Right cardiac atrium (tissue), 5 donors: ENCODE measurements at regions of chr5 and their contacts with region 1.

Region 1: DNA sequence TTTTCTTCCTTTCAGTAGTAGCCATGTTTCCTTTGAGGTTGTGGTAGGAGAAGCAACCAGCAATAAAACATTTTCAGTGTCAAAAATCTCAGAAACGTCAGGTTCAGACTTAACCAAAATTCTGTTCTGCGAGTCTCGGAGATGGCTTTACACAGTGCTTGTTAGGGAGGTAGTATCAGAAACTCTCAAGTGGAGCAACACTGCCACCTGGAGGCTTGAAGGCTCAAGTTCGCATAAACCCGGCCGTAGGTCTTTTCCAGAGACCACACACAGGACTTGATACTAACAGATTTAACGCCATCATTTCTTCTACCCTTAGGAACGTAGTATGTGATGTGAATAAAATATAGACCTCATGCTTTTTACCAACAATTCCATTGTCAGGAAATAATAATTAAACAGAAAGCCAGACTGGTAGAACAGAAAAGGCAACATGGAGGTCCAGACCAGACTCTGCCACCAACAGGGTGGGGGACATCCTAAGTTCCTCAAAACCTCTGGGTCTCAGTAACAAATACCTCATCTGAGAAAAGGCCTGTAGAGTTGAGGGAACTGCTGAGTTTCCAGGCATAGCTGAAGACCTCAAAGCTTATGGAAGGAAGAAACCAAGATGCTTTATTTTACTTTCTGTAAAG is 8.5 kb downstream of the PTGER4 start:
- DNase-seq: peak; percentile 75 to 87 (median 81)
- ATAC-seq: peak; percentile 95
- H3K4me3 ChIP-seq: peak overlapping the region; percentile 39
- H3K27ac ChIP-seq: no peak overlapping the region
- H3K4me1 ChIP-seq: peaks cover 2% of the 10 kb centered on the region
- H3K27me3 ChIP-seq: no peaks in the 10 kb centered on the region

Region 2: GRCh38 chr5:39578887-39579497 is 1109.3 kb before region 1 on chr5:
- intact Hi-C with region 1: loop called (anchors 5 to 10 kb)
- DNase-seq: no peak
- ATAC-seq: no peak
- H3K4me3 ChIP-seq: no peak overlapping the region
- H3K27ac ChIP-seq: no peak overlapping the region
- H3K4me1 ChIP-seq: no peaks in the 10 kb centered on the region
- H3K27me3 ChIP-seq: no peaks in the 10 kb centered on the region

Region 3: DNA sequence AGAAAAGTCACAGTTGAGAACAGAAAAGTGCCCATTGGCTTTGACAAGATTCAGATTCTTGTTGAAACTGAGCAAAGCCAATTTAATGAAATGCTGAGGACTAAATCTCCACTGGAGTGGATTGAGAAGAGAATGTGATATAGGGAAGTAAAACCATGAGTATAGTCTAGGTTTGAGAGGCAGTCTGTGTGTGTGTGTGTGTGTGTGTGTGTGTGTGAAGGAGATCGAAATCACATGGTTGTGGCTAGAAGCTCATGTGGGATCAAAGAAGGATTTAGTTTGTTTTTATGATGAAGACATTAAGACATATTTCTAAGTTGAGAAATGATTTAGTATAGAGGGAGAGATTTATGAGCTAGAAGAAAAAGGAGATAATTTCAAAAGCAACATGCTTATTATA is 987.7 kb before region 1 on chr5:
- intact Hi-C with region 1: loop called in 1 of 4 experiments (anchors 10 kb)
- DNase-seq: no peak
- ATAC-seq: no peak
- H3K4me3 ChIP-seq: no peak overlapping the region
- H3K27ac ChIP-seq: no peak overlapping the region
- H3K4me1 ChIP-seq: no peaks in the 10 kb centered on the region
- H3K27me3 ChIP-seq: no peaks in the 10 kb centered on the region

Region 4: GRCh38 chr5:39714036-39714698 is 974.1 kb before region 1 on chr5:
- intact Hi-C with region 1: loop called in 3 of 4 experiments (anchors 10 kb)
- DNase-seq: no peak
- ATAC-seq: no peak
- H3K4me3 ChIP-seq: no peak overlapping the region
- H3K27ac ChIP-seq: no peak overlapping the region
- H3K4me1 ChIP-seq: no peaks in the 10 kb centered on the region
- H3K27me3 ChIP-seq: no peaks in the 10 kb centered on the region

Region 5: DNA sequence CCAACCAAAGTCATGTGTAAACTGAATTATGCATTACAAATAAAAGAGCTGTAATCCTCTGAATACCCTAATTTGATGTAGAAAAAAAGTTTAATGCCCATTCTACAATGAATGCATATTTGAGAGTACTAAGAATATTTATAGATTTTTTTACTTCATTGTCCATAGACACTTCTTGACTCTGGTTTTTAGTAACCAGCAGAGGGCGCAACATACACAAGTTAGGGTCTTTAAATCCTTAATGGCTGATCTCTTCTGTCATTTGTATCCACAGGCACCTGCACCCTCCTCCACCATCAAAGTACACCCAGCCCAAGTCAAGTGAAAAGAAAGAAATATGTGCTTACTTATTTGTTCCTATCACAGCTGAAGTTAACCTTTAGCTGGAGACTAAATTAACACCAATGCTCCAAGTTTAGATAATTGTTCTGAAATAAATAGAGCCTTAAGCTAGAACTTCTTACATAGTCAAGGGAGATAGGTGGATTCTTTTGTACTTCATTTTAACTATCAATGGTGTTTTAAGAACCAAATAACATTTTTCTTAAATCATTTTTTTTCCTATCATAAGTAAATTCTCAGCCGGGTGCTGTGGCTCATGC is 739.3 kb before region 1 on chr5:
- intact Hi-C with region 1: loop called in 2 of 4 experiments (anchors 5 kb)
- DNase-seq: peak in 2 of 3 donors; percentile 15 to 22
- ATAC-seq: peak; percentile 61 to 65
- H3K4me3 ChIP-seq: no peak overlapping the region
- H3K27ac ChIP-seq: no peak overlapping the region
- H3K4me1 ChIP-seq: no peaks in the 10 kb centered on the region
- H3K27me3 ChIP-seq: no peaks in the 10 kb centered on the region

Region 6: GRCh38 chr5:40798012-40798855 is 110.0 kb after region 1 on chr5 and contains the start of gene PRKAA1:
- intact Hi-C with region 1: no loop called
- DNase-seq: peak; percentile 92 to 97 (median 96)
- ATAC-seq: peak; percentile 96 to 97
- H3K4me3 ChIP-seq: peak within 1 kb of the TSS; percentile 100
- H3K27ac ChIP-seq: peak within 1 kb of the TSS; percentile 96
- H3K4me1 ChIP-seq: no peaks in the 10 kb centered on the region
- H3K27me3 ChIP-seq: no peaks in the 10 kb centered on the region
- total RNA-seq, gene PRKAA1: 35.7 to 50.9 (median 43.7) TPM